GM18951 (cell line): ENCODE measurements at regions of chr16 and their contacts with region 1.

Region 1: DNA sequence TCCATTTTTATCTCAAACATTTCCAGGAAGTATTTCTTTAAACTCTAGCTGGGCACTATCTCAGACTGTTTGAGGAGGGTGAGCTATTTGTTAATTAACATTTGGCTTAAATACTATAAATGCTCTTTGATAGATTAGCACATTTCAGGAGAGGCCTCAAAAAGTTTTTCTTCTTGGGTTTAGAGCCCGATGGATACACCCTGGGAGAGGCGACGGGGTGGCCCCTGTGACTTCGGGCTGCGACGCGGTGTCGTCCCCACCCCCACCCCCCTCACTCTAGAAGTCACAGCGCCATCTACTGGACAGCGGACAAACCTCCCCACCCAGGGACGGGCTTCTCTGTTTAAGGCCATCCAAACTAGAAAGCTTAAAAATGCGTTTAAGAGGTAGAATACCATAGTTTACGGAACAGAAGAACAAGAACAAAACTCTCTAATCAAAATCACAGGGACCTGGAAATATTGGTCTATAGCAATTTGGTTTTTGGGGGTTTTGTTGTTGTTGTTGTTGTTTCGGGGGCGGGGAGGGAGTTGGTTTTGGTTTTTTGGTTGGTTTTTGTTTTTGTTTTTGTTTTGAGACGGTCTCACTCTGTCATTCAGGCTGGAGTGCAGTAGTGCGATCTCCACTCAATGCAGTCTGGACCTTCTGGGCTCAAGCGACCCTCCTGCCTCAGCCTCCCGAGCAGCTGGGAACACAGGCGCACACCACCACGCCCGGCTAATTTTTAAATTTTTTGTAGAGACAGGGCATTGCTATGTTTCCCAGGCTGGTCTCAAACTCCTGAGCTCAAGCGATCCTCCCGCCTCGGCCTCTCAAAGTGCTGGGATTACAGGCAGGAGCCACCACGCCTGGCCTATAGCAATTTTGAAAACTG is 254.4 kb downstream of the C16orf95 start:
- POLR2A ChIP-seq: no peak

Region 2: DNA sequence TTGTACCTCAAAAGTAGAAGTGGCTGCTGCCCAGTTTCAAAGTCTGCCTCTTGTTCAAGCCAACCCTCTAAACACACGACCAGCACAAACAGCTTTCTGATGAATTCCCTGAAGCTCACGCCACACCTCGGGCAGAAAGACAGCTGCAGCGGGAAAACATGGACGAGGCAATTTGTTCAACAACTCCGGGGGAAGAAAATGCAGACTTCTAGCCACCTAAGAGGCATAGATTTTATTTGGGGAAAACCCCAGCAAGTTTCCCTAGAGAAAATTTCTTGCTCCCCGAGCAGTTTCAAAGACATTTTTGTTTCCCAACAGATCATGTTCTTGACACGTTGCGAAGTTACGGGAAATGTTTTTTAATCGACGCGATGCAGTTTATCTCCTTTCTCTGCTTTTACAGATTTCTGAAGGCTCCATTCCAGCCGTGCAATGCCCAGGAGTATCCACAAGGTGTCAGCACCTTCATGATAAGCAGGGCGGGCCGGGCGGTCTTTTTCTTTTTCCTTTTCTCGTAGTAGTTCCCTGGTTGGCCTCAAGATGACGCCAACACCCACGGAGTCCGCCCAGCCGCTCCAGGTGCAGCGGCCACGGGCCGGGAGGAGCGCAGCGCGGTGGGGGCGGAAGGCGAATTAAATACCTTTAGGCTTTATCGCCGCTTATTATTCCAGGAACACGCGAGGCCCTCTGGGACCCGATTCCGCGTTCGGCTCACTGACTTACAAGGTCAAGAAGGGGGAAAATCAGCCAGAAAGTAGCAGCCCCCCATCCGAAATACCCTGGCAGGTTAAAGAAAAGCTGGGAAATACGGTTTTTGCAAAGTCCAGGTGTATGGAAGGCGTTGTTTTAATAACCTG is 499.1 kb before region 1 on chr16:
- in situ Hi-C with region 1: loop called (anchors 10 kb)
- POLR2A ChIP-seq: no peak